Tibial artery (tissue), 4 donors: ENCODE measurements at regions of chr1 and their contacts with region 1.

Region 1: GRCh38 chr1:64675718-64676345 is 69.0 kb upstream of the RAVER2 start:
- DNase-seq: no peak
- H3K4me3 ChIP-seq: no peak overlapping the region
- H3K27ac ChIP-seq: no peak overlapping the region
- H3K4me1 ChIP-seq: no peaks in the 10 kb centered on the region
- H3K27me3 ChIP-seq: no peaks in the 10 kb centered on the region
- CTCF ChIP-seq: peak; percentile 42 to 73

Region 2: DNA sequence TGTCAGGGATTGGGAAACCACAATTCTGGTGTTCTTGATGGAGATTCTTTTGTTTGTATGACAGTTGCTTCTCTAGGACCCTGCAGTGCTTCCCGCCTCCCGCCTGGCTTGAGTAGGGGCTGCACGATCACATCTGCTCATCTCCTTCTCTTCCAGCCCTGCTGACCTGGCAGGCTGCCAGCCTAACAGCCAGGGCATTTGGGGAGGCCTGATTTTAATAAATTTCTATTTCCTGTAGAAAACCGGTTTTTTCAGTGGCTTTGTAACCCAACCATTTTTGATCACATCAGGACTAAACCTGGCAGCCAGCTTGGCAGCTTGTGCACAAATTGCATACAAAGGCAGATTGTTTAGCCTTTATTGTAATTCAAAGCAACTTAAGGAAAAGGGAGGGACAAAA is 393.5 kb before region 1 on chr1:
- intact Hi-C with region 1: loop called (anchors 10 kb)
- DNase-seq: no peak
- H3K4me3 ChIP-seq: no peak overlapping the region
- H3K27ac ChIP-seq: no peak overlapping the region
- H3K4me1 ChIP-seq: no peaks in the 10 kb centered on the region
- H3K27me3 ChIP-seq: no peaks in the 10 kb centered on the region
- CTCF ChIP-seq: no peak

Region 3: DNA sequence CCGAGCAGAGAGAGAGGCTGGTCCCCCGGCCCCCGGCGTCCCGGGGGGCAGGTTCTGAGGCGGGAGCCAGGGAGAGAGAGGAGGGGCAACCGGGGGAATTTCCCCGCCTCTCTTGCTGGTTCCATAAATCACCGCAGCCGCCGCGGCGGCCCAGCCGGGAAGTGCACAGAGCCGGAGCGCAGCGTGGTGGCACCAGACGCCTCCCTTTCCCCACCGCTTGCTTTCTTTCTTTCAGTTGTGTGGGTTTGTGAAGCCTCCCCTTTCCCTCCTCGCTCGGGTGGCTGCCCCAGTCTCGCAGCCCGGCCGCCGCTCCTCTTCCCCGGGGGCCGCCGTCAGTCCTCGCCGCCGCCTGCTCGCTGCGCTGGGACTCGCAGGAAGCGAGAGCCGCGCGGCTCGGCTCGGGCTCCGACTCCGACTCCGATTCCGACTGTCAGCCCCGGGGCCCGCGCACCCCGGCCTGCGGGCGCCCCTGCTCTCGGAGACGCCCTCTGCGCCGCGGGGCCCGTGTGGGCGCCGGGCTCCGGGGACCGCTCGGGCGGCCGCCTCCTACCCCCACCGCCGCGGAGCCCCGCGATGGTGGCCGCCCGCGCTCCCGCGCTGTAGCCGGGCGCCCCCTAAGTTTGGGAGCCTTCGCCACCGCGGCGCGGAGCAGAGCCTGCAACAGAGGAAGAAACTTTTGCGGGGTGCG is 205.7 kb before region 1 on chr1 and contains the start of gene CACHD1:
- intact Hi-C with region 1: loop called (anchors 5 kb)
- DNase-seq: peak; percentile 84 to 85
- H3K4me3 ChIP-seq: peak within 1 kb of the TSS; percentile 73 to 87
- H3K27ac ChIP-seq: peak within 1 kb of the TSS; percentile 76 to 89
- H3K4me1 ChIP-seq: peaks cover 0 to 35% (median 13%) of the 10 kb centered on the region in 4 donors
- H3K27me3 ChIP-seq: no peaks in the 10 kb centered on the region
- CTCF ChIP-seq: peak; percentile 43 to 57

Region 4: GRCh38 chr1:64723783-64724182 is 48.0 kb after region 1 on chr1:
- intact Hi-C with region 1: no loop called
- DNase-seq: no peak
- H3K4me3 ChIP-seq: no peak overlapping the region
- H3K27ac ChIP-seq: no peak overlapping the region
- H3K4me1 ChIP-seq: peaks cover 0 to 13% (median 0%) of the 10 kb centered on the region in 4 donors
- H3K27me3 ChIP-seq: no peaks in the 10 kb centered on the region
- CTCF ChIP-seq: no peak

Region 5: GRCh38 chr1:65762081-65762862 is 1086.4 kb after region 1 on chr1:
- intact Hi-C with region 1: no loop called
- DNase-seq: no peak
- H3K4me3 ChIP-seq: no peak overlapping the region
- H3K27ac ChIP-seq: no peak overlapping the region
- H3K4me1 ChIP-seq: no peaks in the 10 kb centered on the region
- H3K27me3 ChIP-seq: no peaks in the 10 kb centered on the region
- CTCF ChIP-seq: no peak